OCI-LY7 (cell line): ENCODE measurements at regions of chr17 and their contacts with region 1.

Region 1: GRCh38 chr17:55005520-55005919 is 37.0 kb downstream of the STXBP4 start:
- DNase-seq: peak; percentile 40
- H3K4me3 ChIP-seq: no peak overlapping the region
- H3K27ac ChIP-seq: no peak overlapping the region
- H3K4me1 ChIP-seq: no peaks in the 10 kb centered on the region
- CTCF ChIP-seq: peak; percentile 78

Region 2: DNA sequence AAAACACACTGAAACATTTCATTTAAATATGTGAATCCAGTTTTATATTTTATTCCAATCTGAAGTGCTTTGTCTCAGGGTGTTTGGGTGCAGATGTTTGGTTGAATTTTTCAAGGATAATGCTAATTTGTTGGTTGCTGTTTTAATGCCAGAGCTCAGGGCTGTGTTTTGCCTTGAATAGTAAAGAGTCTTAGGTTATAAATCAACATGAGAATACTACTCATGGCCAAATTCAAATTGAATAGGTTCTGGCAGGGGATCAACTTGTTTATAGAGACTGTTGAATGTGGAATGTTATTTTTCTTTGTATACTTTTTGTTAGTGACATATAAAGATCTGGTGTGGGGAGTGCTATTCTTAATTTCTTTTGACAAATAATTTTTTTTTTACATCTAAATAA is 86.1 kb before region 1 on chr17:
- CTCF ChIA-PET with region 1: no interaction called
- POLR2A ChIA-PET with region 1: no interaction called
- intact Hi-C with region 1: no loop called
- DNase-seq: no peak
- H3K4me3 ChIP-seq: no peak overlapping the region
- H3K27ac ChIP-seq: no peak overlapping the region
- H3K4me1 ChIP-seq: no peaks in the 10 kb centered on the region
- CTCF ChIP-seq: no peak

Region 3: GRCh38 chr17:55067697-55068439 is 62.3 kb after region 1 on chr17:
- CTCF ChIA-PET with region 1: no interaction called
- POLR2A ChIA-PET with region 1: no interaction called
- intact Hi-C with region 1: no loop called
- DNase-seq: no peak
- H3K4me3 ChIP-seq: no peak overlapping the region
- H3K27ac ChIP-seq: no peak overlapping the region
- H3K4me1 ChIP-seq: no peaks in the 10 kb centered on the region
- CTCF ChIP-seq: no peak

Region 4: DNA sequence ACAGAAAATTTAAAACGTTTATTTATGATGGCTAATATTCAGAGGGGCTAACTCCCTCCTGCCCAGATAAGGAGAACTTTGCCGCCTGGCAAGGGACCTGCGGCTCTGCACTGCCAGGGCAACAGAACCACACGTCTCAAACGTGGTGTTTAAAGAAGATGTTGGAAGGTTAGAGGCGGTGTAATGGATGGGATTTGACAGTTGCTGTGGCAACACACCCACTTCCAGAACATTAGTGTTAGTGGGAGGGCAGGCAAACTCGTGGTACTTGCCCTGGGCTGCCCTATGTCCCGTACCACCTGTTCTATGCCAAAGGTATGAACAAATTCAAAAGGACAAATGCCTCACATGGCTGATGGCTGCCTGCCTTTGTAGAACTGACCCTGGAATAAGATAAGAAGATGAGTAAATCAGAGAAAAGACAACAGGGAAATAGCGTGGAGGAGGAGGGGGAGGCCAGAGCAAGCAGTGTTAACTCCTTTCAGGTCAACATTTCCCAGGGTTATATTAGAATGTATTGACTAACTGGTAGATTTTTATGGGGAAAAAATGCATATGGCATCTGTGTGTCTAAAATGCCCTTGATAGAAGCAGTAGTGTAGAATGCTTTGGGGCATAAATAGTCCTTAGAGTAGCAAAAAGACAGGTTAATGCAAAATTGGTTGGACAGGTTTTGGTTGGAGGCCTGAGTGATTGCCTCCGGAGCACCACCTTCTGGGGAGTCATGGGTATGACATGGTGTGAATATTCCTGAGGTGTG is 290.1 kb after region 1 on chr17:
- CTCF ChIA-PET with region 1: no interaction called
- POLR2A ChIA-PET with region 1: interaction called, 3 read pairs
- intact Hi-C with region 1: loop called (anchors 5 kb)
- DNase-seq: peak; percentile 67
- H3K4me3 ChIP-seq: no peak overlapping the region
- H3K27ac ChIP-seq: no peak overlapping the region
- H3K4me1 ChIP-seq: peaks cover 4% of the 10 kb centered on the region
- CTCF ChIP-seq: peak; percentile 91